WTC11 (cell line): ENCODE measurements at regions of chr5 and their contacts with region 1.

Region 1: GRCh38 chr5:177607452-177608192 is 7.7 kb downstream of the B4GALT7 start:
- DNase-seq: peak; percentile 94
- ATAC-seq: peak; percentile 93
- H3K4me3 Mint-ChIP-seq: no peak overlapping the region; the same call in 1 of the 2 replicates
- H3K27ac Mint-ChIP-seq: peak overlapping the region; percentile 68
- H3K4me1 Mint-ChIP-seq: peaks cover 17% of the 10 kb centered on the region
- H3K27me3 Mint-ChIP-seq: no peaks in the 10 kb centered on the region; the same call in 1 of the 2 replicates
- CTCF ChIP-seq: peak; percentile 71

Region 2: GRCh38 chr5:177133091-177133852 is 474.4 kb before region 1 on chr5 and contains the start of gene NSD1:
- CTCF ChIA-PET with region 1: no interaction called
- POLR2A ChIA-PET with region 1: no interaction called
- DNase-seq: peak; percentile 93
- ATAC-seq: peak; percentile 69
- H3K4me3 Mint-ChIP-seq: peak within 1 kb of the TSS; percentile 85
- H3K27ac Mint-ChIP-seq: peak within 1 kb of the TSS; percentile 68; the same call in 1 of the 2 replicates
- H3K4me1 Mint-ChIP-seq: peaks cover 44% of the 10 kb centered on the region
- H3K27me3 Mint-ChIP-seq: no peaks in the 10 kb centered on the region; the same call in 1 of the 2 replicates
- CTCF ChIP-seq: no peak
- total RNA-seq, gene NSD1: 144 to 153 TPM (median 148 TPM) in 3 replicates

Region 3: GRCh38 chr5:177557041-177557647 is 50.5 kb before region 1 on chr5:
- CTCF ChIA-PET with region 1: interaction called, 14 read pairs
- POLR2A ChIA-PET with region 1: interaction called, 4 read pairs
- DNase-seq: no peak
- ATAC-seq: no peak
- H3K4me3 Mint-ChIP-seq: no peak overlapping the region
- H3K27ac Mint-ChIP-seq: no peak overlapping the region; the same call in 1 of the 2 replicates
- H3K4me1 Mint-ChIP-seq: peaks cover 27% of the 10 kb centered on the region
- H3K27me3 Mint-ChIP-seq: peaks cover 15% of the 10 kb centered on the region
- CTCF ChIP-seq: no peak

Region 4: DNA sequence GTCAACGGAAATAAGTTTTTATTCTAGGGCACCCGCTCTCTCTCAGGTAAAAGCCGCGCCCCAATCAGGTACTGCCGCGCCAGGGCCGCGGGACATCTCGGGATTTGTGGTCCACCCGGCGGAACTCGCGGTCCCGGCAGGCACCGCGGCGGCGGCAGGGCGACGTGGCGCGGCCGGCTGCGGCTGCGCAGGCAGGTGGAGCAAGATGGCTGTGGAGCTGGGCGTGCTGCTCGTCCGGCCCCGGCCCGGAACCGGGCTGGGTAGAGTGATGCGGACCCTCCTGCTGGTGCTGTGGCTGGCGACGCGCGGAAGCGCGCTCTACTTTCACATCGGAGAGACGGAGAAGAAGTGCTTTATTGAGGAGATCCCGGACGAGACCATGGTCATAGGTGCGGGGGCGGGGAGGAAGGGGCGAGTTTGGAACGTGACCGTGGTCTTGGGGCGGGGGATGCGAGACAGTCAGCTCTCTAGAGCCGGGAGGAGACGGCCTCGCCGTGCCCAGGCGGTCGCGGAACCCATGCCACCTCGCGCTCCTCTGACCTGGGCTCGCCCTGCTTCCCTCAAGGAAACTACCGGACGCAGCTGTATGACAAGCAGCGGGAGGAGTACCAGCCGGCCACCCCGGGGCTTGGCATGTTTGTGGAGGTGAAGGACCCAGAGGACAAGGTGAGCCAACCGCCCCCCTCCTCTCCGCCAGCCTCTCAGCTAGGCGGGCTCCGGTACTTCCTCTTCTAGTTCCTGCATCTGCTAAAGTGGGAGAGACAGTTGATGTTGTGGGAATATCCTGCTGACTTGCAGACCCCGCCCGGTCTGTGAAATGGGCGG is 15.4 kb before region 1 on chr5 and contains the start of gene TMED9:
- CTCF ChIA-PET with region 1: interaction called, 38 read pairs
- POLR2A ChIA-PET with region 1: interaction called, 3 read pairs
- DNase-seq: peak; percentile 90
- ATAC-seq: peak; percentile 97
- H3K4me3 Mint-ChIP-seq: peak within 1 kb of the TSS; percentile 100
- H3K27ac Mint-ChIP-seq: peak within 1 kb of the TSS; percentile 99
- H3K4me1 Mint-ChIP-seq: peaks cover 6% of the 10 kb centered on the region
- H3K27me3 Mint-ChIP-seq: peaks cover 30% of the 10 kb centered on the region
- CTCF ChIP-seq: no peak
- total RNA-seq, gene TMED9: 164 to 172 TPM (median 170 TPM) in 3 replicates